Breast epithelium (tissue), 4 donors: ENCODE measurements at regions of chr2 and their contacts with region 1.

Region 1: GRCh38 chr2:65554765-65555591 is 122.6 kb upstream of the SPRED2 start:
- DNase-seq: no peak
- H3K4me3 ChIP-seq: no peak overlapping the region
- H3K27ac ChIP-seq: no peak overlapping the region
- H3K4me1 ChIP-seq: no peaks in the 10 kb centered on the region
- H3K27me3 ChIP-seq: no peaks in the 10 kb centered on the region
- CTCF ChIP-seq: no peak
- POLR2A ChIP-seq: no peak

Region 2: DNA sequence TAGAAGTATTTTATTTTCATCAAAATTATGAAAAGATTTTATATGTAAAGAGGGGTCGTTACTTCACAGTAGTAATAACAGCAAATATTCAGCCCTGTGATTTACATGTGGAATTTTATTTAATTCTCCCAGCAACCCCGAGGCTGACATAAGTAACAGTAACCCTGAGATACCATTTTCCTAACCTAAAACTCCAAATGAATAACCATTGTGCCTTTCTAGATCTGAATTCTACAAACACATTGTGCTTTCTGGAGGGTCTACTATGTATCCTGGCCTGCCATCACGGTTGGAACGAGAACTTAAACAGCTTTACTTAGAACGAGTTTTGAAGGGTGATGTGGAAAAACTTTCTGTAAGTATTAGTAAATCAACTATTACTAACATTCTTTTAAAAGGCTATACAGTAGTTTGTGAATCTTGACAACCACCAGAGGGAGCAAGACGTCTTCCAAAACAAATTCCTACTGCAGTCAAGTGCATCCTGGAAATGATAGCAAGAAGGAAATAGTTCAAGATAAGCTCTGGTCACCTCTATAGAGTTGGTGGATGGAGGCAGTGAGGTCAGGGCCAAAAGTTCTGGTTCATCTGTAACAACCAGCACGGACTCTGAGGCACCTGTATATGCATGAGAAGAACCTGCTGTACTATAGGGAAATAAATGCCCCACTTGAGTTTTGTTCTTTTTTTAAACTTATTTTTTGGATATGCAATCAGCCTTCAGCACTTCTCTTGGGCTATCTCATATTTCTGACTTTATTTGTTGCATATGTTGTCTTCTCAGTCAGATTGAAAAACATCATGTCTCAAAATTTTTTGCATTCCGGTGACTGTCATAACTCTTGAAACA is 289.9 kb before region 1 on chr2:
- intact Hi-C with region 1: loop called (anchors 5 kb)
- DNase-seq: no peak
- H3K4me3 ChIP-seq: no peak overlapping the region
- H3K27ac ChIP-seq: no peak overlapping the region
- H3K4me1 ChIP-seq: no peaks in the 10 kb centered on the region
- H3K27me3 ChIP-seq: no peaks in the 10 kb centered on the region
- CTCF ChIP-seq: peak; percentile 73 to 80 (median 74)
- POLR2A ChIP-seq: no peak

Region 3: GRCh38 chr2:65576861-65577601 is 22.1 kb after region 1 on chr2:
- intact Hi-C with region 1: no loop called
- DNase-seq: no peak
- H3K4me3 ChIP-seq: peak overlapping the region in 1 of 3 donors; percentile 33
- H3K27ac ChIP-seq: peak overlapping the region; percentile 67 to 82
- H3K4me1 ChIP-seq: no peaks in the 10 kb centered on the region
- H3K27me3 ChIP-seq: no peaks in the 10 kb centered on the region
- CTCF ChIP-seq: no peak
- POLR2A ChIP-seq: no peak

Region 4: GRCh38 chr2:65604245-65604644 is 49.3 kb after region 1 on chr2:
- intact Hi-C with region 1: no loop called
- DNase-seq: no peak
- H3K4me3 ChIP-seq: no peak overlapping the region
- H3K27ac ChIP-seq: no peak overlapping the region
- H3K4me1 ChIP-seq: no peaks in the 10 kb centered on the region
- H3K27me3 ChIP-seq: no peaks in the 10 kb centered on the region
- CTCF ChIP-seq: no peak
- POLR2A ChIP-seq: no peak